PC-9 (cell line): ENCODE measurements at regions of chr3 and their contacts with region 1.

Region 1: GRCh38 chr3:183233966-183234365 is 19.1 kb upstream of the B3GNT5 start:
- DNase-seq: no peak
- H3K4me3 ChIP-seq: no peak overlapping the region
- H3K27ac ChIP-seq: no peak overlapping the region
- H3K4me1 ChIP-seq: no peaks in the 10 kb centered on the region
- H3K27me3 ChIP-seq: no peaks in the 10 kb centered on the region
- CTCF ChIP-seq: no peak

Region 2: DNA sequence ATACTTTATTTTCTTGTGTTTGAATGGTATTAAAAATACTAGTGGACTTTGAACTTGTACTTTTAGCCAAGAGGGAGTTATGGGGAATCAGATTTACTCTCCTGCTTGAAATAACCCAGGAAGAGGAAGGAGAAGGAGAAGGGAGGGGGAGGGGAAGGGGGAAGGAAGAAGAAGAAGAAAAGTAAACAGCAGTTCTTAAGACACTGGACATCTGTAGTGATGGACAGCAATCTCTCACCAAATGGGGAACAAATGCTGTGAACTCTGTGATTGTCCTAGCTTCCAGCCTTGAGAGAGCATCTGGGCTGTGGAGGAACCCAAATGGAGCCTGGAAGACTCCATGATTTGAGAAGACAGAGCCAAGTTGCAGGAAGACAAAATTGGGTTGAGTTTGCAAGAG is 1630.0 kb after region 1 on chr3:
- CTCF ChIA-PET with region 1: no interaction called
- POLR2A ChIA-PET with region 1: interaction called, 13 read pairs
- intact Hi-C with region 1: no loop called
- DNase-seq: no peak
- H3K4me3 ChIP-seq: no peak overlapping the region
- H3K27ac ChIP-seq: no peak overlapping the region
- H3K4me1 ChIP-seq: no peaks in the 10 kb centered on the region
- H3K27me3 ChIP-seq: no peaks in the 10 kb centered on the region
- CTCF ChIP-seq: no peak